ENCODE measurements at regions of chr2 and their contacts with region 1.

Region 1: DNA sequence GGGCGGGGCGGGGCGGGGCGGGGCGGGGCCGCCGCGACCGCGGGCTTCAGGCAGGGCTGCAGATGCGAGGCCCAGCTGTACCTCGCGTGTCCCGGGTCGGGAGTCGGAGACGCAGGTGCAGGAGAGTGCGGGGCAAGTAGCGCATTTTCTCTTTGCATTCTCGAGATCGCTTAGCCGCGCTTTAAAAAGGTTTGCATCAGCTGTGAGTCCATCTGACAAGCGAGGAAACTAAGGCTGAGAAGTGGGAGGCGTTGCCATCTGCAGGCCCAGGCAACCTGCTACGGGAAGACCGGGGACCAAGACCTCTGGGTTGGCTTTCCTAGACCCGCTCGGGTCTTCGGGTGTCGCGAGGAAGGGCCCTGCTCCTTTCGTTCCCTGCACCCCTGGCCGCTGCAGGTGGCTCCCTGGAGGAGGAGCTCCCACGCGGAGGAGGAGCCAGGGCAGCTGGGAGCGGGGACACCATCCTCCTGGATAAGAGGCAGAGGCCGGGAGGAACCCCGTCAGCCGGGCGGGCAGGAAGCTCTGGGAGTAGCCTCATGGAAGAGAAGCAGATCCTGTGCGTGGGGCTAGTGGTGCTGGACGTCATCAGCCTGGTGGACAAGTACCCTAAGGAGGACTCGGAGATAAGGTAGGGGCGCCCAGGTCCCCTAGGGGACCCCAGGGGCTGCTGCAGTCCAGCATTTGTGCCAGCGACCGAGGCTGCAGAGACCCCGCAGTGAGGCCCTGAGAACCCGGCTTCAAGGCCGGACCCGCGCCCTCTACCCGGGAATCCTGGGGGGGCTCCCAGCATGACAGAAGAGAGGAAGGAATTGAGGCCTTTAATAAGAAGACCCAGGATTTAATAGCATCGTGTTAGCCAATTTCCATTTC is at the start of gene KHK:
- DNase-seq: peak; percentile 57
- H3K4me3 Mint-ChIP-seq: peak within 1 kb of the TSS; percentile 80
- H3K27ac Mint-ChIP-seq: peak within 1 kb of the TSS; percentile 90
- H3K4me1 Mint-ChIP-seq: peaks cover 56% of the 10 kb centered on the region
- H3K27me3 Mint-ChIP-seq: no peaks in the 10 kb centered on the region

Region 2: GRCh38 chr2:26959331-26959730 is 127.6 kb before region 1 on chr2:
- CTCF ChIA-PET with region 1: interaction called, 10 read pairs
- DNase-seq: no peak
- H3K4me3 Mint-ChIP-seq: no peak overlapping the region
- H3K27ac Mint-ChIP-seq: peak overlapping the region; percentile 4
- H3K4me1 Mint-ChIP-seq: no peaks in the 10 kb centered on the region
- H3K27me3 Mint-ChIP-seq: peaks cover 62% of the 10 kb centered on the region

Region 3: DNA sequence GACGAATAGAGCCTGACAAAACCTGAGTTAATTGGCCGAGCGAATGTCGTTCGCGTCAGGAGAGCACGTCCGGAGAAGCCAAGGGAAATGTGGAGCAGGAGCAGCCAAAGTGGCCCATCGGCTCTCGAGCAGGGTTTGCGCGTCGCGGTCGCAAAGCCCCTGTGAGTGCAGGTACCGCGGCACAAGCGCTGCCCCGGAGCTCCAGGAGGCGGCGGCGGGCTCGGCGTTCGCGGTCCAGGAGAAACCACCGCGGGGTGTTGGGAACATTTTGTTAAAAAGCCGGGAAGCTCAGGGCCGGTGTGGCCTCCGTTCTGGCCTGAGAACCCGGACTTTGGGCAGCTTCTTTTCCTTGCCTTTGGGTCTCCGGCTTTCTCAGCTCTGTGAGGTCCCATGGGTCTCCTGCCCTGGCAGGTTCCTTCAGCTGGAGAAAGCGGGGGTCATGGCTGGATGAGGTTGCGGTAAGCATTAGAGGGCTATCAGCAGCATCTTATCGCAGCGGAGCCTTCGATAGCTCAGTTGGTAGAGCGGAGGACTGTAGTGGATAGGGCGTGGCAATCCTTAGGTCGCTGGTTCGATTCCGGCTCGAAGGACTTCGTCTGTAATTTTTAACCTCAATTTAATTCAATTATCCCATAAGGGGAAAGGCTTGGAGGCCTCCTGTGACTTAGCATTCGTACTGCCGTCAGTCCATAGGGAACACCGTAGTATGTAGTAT is 36.5 kb before region 1 on chr2:
- CTCF ChIA-PET with region 1: interaction called, 21 read pairs
- DNase-seq: peak; percentile 93
- H3K4me3 Mint-ChIP-seq: peak overlapping the region; percentile 92
- H3K27ac Mint-ChIP-seq: peak overlapping the region; percentile 98
- H3K4me1 Mint-ChIP-seq: peaks cover 27% of the 10 kb centered on the region
- H3K27me3 Mint-ChIP-seq: peaks cover 13% of the 10 kb centered on the region

Measured in activated naive CD4-positive, alpha-beta T cell treated with anti-CD3 and anti-CD28 coated beads, Interleukin-2, amount 10 ng/mL, durations not matched to agents 7 days and 5 days (primary cell).